SK-N-SH (cell line): ENCODE measurements at regions of chr22 and their contacts with region 1.

Region 1: GRCh38 chr22:23225724-23226496 is 45.6 kb downstream of the BCR start:
- DNase-seq: no peak
- H3K4me3 ChIP-seq: no peak overlapping the region
- H3K27ac ChIP-seq: peak overlapping the region; percentile 34 to 98
- H3K4me1 ChIP-seq: peaks cover 19 to 55% of the 10 kb centered on the region in 2 experiments; a peak in 3 of 4 replicates
- H3K27me3 ChIP-seq: no peaks in the 10 kb centered on the region
- CTCF ChIP-seq: no peak
- EP300 ChIP-seq: no peak
- RAD21 ChIP-seq: no peak

Region 2: DNA sequence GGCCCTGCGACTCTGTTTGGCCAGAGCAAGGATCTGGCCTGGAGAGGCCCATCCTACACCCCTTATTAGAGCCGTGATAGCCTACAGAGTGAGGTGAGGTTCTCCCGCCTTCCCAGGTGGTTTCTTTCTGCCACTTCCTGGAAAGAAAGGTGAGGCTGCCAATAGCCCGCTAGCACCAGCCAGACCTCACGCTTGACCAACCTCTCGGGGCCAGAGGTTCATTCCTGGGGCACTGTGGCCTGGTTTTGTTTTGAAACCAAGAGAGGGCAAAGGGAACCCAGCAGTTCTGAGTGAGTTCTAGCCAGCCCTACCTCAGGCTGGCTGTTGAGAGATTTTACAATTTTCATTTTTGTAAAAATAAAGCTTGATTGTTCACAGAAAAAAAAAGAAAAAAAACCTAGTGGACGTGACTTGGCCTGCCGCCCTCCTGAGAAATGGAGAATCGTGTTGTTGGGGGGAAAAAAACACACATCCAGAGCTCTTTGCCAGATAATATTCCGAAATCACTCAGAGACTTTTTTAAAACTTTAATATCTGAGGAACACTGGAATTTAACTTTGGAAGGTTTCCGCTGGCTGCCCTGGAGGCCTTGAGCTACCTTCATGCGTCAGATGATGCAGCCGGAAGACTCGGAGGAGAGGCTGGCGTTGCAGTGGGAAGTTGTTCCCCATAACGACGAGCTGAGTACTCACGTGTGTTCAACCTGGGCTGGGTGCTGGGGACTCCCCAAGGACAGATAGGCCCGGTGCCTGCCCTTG is 38.9 kb after region 1 on chr22:
- CTCF ChIA-PET with region 1: interaction called, 10 read pairs
- POLR2A ChIA-PET with region 1: no interaction called
- DNase-seq: no peak
- H3K4me3 ChIP-seq: no peak overlapping the region
- H3K27ac ChIP-seq: no peak overlapping the region
- H3K4me1 ChIP-seq: peaks cover 0 to 27% of the 10 kb centered on the region in 2 experiments; a peak in 1 of 4 replicates
- H3K27me3 ChIP-seq: no peaks in the 10 kb centered on the region
- CTCF ChIP-seq: no peak
- EP300 ChIP-seq: no peak
- RAD21 ChIP-seq: no peak